GM12878 (cell line): ENCODE measurements at regions of chr5 and their contacts with region 1.

Region 1: GRCh38 chr5:142959683-142960657 is 189.8 kb downstream of the ARHGAP26 start:
- DNase-seq: no peak
- ATAC-seq: peak; percentile 82
- H3K4me3 ChIP-seq: no peak overlapping the region
- H3K27ac ChIP-seq: no peak overlapping the region
- H3K4me1 ChIP-seq: peaks cover 5% of the 10 kb centered on the region; the same call in 1 of the 2 replicates
- H3K27me3 ChIP-seq: no peaks in the 10 kb centered on the region
- CTCF ChIP-seq: no peak
- EP300 ChIP-seq: peak in 1 of 2 experiments; percentile 38; a peak in 1 of 4 replicates
- POLR2A ChIP-seq: no peak
- RAD21 ChIP-seq: no peak

Region 2: GRCh38 chr5:142938266-142938880 is 21.6 kb before region 1 on chr5:
- CTCF ChIA-PET with region 1: interaction called, 6 read pairs
- POLR2A ChIA-PET with region 1: interaction called, 3 read pairs
- RAD21 ChIA-PET with region 1: no interaction called
- SMC1A ChIA-PET with region 1: interaction called, 15 read pairs
- in situ Hi-C with region 1: no loop called
- intact Hi-C with region 1: no loop called
- DNase-seq: no peak
- ATAC-seq: no peak
- H3K4me3 ChIP-seq: no peak overlapping the region
- H3K27ac ChIP-seq: no peak overlapping the region
- H3K4me1 ChIP-seq: peaks cover 4% of the 10 kb centered on the region; the same call in 1 of the 2 replicates
- H3K27me3 ChIP-seq: no peaks in the 10 kb centered on the region
- CTCF ChIP-seq: no peak
- EP300 ChIP-seq: no peak
- POLR2A ChIP-seq: no peak
- RAD21 ChIP-seq: no peak